ENCODE measurements at regions of chr6 and their contacts with region 1.

Region 1: GRCh38 chr6:99330159-99330558 is 19.3 kb downstream of the FAXC start:
- DNase-seq: peak; percentile 71
- ATAC-seq: peak; percentile 81
- H3K4me3 ChIP-seq: no peak overlapping the region
- H3K27ac ChIP-seq: no peak overlapping the region
- H3K4me1 ChIP-seq: peaks cover 16% of the 10 kb centered on the region
- H3K27me3 ChIP-seq: no peaks in the 10 kb centered on the region
- CTCF ChIP-seq: peak; percentile 79 to 87 (median 82)
- EP300 ChIP-seq: 0 out of 4 replicates have a peak, but pooled peaks of 1 of the 2 experiments have one; percentile 23
- POLR2A ChIP-seq: no peak
- RAD21 ChIP-seq: peak; percentile 73

Region 2: GRCh38 chr6:98992535-98992934 is 337.6 kb before region 1 on chr6:
- CTCF ChIA-PET with region 1: no interaction called
- POLR2A ChIA-PET with region 1: no interaction called
- RAD21 ChIA-PET with region 1: no interaction called
- SMC1A ChIA-PET with region 1: no interaction called
- in situ Hi-C with region 1: no loop called
- intact Hi-C with region 1: no loop called
- DNase-seq: no peak
- ATAC-seq: no peak
- H3K4me3 ChIP-seq: no peak overlapping the region
- H3K27ac ChIP-seq: no peak overlapping the region
- H3K4me1 ChIP-seq: no peaks in the 10 kb centered on the region
- H3K27me3 ChIP-seq: no peaks in the 10 kb centered on the region; a peak in 1 of 4 replicates
- CTCF ChIP-seq: no peak
- EP300 ChIP-seq: no peak
- POLR2A ChIP-seq: no peak
- RAD21 ChIP-seq: no peak

Region 3: DNA sequence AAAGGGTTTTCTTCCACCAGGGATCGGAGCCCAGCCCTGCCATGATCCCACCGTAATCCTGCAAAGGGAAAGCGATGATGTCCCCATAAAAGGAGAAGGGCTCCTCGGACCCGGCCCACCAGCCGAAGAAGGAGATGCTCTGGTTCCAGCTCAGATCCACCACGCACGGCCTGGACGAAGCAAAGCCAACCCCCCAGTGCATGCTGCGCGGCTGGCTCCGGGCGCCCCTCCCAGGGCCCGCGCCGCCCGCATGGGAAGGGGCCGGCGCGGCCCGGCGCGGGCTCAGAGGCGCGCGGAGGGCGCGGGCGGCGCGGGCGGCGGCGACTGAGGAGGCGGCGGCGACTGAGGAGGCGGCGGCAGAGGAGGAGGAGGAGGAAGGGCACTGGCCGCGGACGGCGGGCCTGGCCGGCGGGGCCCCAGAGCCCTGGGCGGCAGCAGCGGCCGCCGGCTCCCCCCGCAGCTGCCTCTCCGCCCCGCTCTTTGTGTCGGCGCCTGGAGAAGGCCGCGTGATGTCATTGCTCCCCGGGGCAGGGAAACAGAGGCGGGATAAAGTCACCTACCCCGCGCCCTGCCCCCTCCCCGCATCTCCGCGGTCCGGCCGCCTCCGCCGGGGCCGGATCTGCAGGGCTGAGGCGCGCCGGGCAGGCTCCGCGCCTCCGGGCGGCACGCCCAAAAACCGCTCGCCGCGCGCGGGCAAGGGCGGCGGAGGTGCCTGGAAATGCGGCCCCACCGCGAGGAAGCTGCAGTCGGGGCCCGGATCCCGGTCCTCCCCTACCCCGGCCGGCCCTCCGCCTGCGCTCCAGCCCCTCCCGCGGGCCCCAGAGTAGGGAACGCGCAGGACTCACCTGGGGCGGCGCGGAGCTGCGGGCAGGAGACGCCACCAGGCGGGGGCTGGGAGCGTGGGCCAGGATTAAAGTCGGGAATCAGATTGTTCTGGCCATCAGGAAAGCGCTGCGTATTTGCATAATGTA is 19.3 kb after region 1 on chr6 and contains the start of gene FAXC:
- CTCF ChIA-PET with region 1: interaction called, 14 read pairs
- POLR2A ChIA-PET with region 1: no interaction called
- RAD21 ChIA-PET with region 1: interaction called, 7 read pairs
- SMC1A ChIA-PET with region 1: interaction called, 7 read pairs
- in situ Hi-C with region 1: no loop called
- intact Hi-C with region 1: no loop called
- DNase-seq: no peak
- ATAC-seq: peak; percentile 68
- H3K4me3 ChIP-seq: peak within 1 kb of the TSS; percentile 58; the same call in 1 of the 2 replicates
- H3K27ac ChIP-seq: no peak within 1 kb of the TSS
- H3K4me1 ChIP-seq: no peaks in the 10 kb centered on the region
- H3K27me3 ChIP-seq: peaks cover 6 to 19% of the 10 kb centered on the region in 2 experiments
- CTCF ChIP-seq: no peak; a peak in 1 of 6 replicates
- EP300 ChIP-seq: no peak
- POLR2A ChIP-seq: no peak
- RAD21 ChIP-seq: no peak
- polyA plus RNA-seq, gene FAXC: not detected

Region 4: DNA sequence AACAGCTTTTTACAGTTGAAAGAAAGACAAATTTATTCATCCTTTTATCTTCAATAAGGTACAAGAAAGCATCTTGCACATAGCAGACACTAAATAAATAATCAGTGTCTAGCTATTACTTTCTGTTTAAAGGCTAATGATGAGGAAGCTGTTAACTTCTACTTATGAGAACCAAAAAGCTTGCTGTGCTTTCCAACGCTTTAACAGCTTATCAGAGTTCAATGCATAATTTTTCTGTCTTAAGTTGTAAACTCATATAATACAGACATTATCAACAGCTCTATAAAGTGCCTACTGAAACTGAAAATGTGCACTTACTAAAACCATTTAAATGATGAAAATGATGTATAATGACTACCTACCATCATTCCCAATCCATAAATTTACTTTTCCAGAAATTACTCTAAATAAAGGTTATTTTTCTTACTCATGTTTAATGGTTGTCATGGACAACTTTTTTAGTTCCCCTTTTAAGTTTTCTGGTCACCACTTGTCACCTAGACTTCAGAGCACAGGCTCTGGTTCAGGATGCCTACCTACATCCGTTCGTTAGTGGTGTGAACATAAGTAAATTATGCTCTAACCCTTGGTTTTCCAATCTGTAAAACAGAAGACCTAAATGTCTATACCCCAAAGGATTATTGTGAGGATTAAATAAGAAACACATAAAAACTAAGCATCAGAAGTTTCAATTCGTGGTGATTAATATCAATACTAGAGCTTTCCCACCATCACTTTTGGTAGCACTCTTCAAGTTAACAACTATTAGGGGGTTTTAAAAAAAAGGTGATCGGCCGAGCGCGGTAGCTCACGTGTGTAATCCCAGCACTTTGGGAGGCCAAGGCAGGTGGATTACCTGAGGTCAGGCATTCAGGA is 87.0 kb after region 1 on chr6:
- CTCF ChIA-PET with region 1: interaction called, 10 read pairs
- POLR2A ChIA-PET with region 1: no interaction called
- RAD21 ChIA-PET with region 1: interaction called, 6 read pairs
- SMC1A ChIA-PET with region 1: interaction called, 13 read pairs
- in situ Hi-C with region 1: no loop called
- intact Hi-C with region 1: no loop called
- DNase-seq: peak; percentile 38
- ATAC-seq: peak; percentile 86
- H3K4me3 ChIP-seq: peak overlapping the region; percentile 44; the same call in 1 of the 2 replicates
- H3K27ac ChIP-seq: peak overlapping the region; percentile 10
- H3K4me1 ChIP-seq: peaks cover 11% of the 10 kb centered on the region
- H3K27me3 ChIP-seq: no peaks in the 10 kb centered on the region
- CTCF ChIP-seq: no peak
- EP300 ChIP-seq: no peak
- POLR2A ChIP-seq: no peak
- RAD21 ChIP-seq: no peak

Region 5: DNA sequence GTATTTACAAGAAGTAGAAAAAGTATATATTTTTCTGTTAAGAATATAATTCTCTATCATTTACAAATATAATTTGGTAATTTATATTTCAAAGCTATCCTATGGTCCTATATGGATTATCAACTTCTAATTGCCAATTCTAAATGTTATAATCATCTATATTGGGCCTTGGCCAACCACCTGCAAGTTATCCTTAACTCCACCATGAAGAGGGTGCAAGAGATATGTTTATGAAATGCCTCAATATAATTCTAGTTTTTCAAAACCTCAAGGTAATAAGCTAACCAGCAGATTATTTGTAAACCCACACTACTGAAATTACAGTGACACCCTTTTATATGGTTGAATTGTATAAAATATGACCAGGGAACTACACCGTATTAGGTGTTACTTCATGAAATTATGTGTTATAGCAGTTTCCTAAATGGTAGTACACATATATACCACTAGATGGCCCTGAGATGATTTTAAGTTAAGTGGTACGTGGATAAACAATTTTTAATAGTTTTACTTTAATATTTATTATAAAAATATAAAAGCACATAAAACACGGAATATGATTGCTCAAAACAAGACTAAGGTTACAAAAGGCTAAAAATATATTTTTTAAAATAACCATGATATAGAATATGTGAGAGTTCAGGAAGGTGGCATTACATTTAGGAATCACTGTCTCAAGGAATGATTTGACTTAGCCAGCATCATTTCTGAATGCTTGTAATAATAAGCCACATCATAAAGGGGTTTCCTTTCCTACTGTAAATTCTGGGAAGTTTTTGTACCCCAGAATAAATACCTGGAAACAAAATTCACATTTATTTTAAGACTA is 104.8 kb after region 1 on chr6:
- CTCF ChIA-PET with region 1: interaction called, 22 read pairs
- POLR2A ChIA-PET with region 1: no interaction called
- RAD21 ChIA-PET with region 1: interaction called, 5 read pairs
- SMC1A ChIA-PET with region 1: interaction called, 15 read pairs
- in situ Hi-C with region 1: no loop called
- intact Hi-C with region 1: no loop called
- DNase-seq: no peak
- ATAC-seq: peak; percentile 92
- H3K4me3 ChIP-seq: no peak overlapping the region
- H3K27ac ChIP-seq: no peak overlapping the region
- H3K4me1 ChIP-seq: no peaks in the 10 kb centered on the region
- H3K27me3 ChIP-seq: no peaks in the 10 kb centered on the region
- CTCF ChIP-seq: peak in 2 of 3 experiments; percentile 38 to 43; a peak in 4 of 6 replicates
- EP300 ChIP-seq: no peak
- POLR2A ChIP-seq: no peak
- RAD21 ChIP-seq: no peak

Region 6: GRCh38 chr6:99520855-99521632 is 190.9 kb after region 1 on chr6:
- CTCF ChIA-PET with region 1: interaction called, 8 read pairs
- POLR2A ChIA-PET with region 1: no interaction called
- RAD21 ChIA-PET with region 1: no interaction called
- SMC1A ChIA-PET with region 1: no interaction called
- in situ Hi-C with region 1: no loop called
- intact Hi-C with region 1: loop called (anchors 1 kb)
- DNase-seq: no peak
- ATAC-seq: peak; percentile 94
- H3K4me3 ChIP-seq: peak overlapping the region; percentile 88
- H3K27ac ChIP-seq: peak overlapping the region; percentile 79
- H3K4me1 ChIP-seq: peaks cover 4% of the 10 kb centered on the region; the same call in 1 of the 2 replicates
- H3K27me3 ChIP-seq: no peaks in the 10 kb centered on the region
- CTCF ChIP-seq: peak; percentile 76 to 91 (median 80)
- EP300 ChIP-seq: no peak
- POLR2A ChIP-seq: peak; percentile 92
- RAD21 ChIP-seq: peak; percentile 58

Region 7: GRCh38 chr6:99613409-99613704 is 283.2 kb after region 1 on chr6:
- CTCF ChIA-PET with region 1: interaction called, 4 read pairs
- POLR2A ChIA-PET with region 1: no interaction called
- RAD21 ChIA-PET with region 1: interaction called, 4 read pairs
- SMC1A ChIA-PET with region 1: no interaction called
- in situ Hi-C with region 1: no loop called
- intact Hi-C with region 1: loop called (anchors 5 kb)
- DNase-seq: no peak
- ATAC-seq: peak; percentile 66
- H3K4me3 ChIP-seq: peak overlapping the region; percentile 49; the same call in 1 of the 2 replicates
- H3K27ac ChIP-seq: no peak overlapping the region
- H3K4me1 ChIP-seq: peaks cover 19% of the 10 kb centered on the region
- H3K27me3 ChIP-seq: peaks cover 3 to 20% of the 10 kb centered on the region in 2 experiments
- CTCF ChIP-seq: peak; percentile 34 to 55 (median 38); a peak in 5 of 6 replicates
- EP300 ChIP-seq: no peak
- POLR2A ChIP-seq: no peak
- RAD21 ChIP-seq: peak; percentile 24; the same call in 1 of the 2 replicates